Cardiac septum (tissue), 1 donor: ENCODE measurements at regions of chr21 and their contacts with region 1.

Region 1: DNA sequence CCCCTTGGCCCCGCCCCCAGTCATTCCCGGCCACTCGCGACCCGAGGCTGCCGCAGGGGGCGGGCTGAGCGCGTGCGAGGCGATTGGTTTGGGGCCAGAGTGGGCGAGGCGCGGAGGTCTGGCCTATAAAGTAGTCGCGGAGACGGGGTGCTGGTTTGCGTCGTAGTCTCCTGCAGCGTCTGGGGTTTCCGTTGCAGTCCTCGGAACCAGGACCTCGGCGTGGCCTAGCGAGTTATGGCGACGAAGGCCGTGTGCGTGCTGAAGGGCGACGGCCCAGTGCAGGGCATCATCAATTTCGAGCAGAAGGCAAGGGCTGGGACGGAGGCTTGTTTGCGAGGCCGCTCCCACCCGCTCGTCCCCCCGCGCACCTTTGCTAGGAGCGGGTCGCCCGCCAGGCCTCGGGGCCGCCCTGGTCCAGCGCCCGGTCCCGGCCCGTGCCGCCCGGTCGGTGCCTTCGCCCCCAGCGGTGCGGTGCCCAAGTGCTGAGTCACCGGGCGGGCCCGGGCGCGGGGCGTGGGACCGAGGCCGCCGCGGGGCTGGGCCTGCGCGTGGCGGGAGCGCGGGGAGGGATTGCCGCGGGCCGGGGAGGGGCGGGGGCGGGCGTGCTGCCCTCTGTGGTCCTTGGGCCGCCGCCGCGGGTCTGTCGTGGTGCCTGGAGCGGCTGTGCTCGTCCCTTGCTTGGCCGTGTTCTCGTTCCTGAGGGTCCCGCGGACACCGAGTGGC is at the start of gene SOD1:
- DNase-seq: peak; percentile 97
- total RNA-seq, gene SOD1: 384 TPM

Region 2: DNA sequence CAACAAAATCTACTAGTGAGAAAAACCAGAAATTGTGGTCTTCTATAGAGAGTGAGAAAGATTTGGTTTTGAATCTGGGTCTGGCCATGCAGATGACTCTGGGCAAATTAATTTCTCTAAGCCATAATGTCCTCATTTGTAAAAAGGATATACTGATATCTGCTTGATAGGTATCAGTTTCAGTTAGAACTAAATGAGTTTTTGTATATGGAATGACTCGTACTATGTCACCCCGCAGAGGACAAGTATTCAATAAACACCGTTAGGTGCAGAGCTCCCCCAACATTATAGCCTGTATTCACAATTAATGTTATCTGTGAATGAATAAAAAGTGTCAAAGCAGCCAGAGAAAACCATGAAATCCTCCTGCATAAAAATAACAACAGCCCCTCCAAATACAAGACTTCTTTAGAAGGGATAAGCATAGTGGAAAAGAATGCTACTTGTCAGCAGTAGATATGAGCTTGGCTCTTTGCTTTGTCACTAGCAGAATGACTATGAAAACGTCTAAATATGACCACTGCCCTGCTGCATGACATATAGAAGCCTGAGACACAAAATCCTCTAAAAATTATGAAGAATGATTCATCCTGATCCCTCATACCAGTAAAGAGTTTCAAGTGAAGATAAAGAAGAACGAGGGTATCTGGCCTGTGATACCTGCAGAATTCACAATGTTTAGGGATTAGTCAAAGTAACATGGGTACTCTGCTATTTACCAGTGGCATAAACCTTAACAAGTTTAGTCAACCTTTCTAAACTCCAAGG is 54.5 kb after region 1 on chr21:
- intact Hi-C with region 1: no loop called
- DNase-seq: no peak

Region 3: DNA sequence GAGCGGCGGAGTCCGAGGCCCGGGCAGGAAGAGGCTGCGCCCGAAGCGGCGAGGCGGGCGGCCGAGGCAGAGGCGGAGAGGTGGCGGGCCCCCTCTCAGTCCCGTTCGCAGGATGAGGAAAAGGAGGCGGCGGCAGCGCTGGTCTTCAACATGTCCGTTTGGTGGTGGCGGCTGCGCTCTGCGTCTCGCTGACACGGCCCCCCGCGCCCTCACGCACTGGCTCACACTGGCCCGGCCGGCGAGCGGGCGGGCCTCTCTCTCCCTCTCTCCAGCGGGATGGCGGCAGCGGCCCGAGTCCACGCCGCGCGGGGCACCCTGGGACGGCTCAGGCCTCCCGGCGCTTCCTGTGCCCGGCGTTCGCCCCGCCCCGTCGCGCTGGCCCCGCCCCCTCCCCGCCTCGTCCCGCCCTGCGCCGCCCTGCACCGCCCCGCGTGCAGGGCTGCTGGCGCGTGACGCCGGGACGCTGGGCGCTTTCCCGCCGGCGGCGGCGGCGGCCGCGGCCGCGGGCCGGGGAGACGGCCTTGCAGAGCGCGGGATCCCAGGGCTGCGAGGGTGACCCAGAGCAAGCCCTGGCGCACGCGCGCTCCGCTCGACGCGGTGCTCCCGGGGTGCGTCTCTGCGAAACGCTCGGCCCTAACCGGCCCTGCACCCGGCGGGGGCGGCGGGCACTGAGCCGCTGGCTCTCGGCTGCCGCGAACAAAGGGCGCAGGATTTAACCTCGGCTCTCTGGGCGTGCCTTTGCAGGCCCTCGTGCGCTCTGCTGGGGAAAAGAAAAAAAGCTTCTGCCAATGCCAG is 72.3 kb after region 1 on chr21 and contains the start of gene SCAF4:
- intact Hi-C with region 1: loop called (anchors 2 kb)
- DNase-seq: peak; percentile 95
- total RNA-seq, gene SCAF4: 20.6 TPM